Activated CD4-positive, alpha-beta memory T cell treated with anti-CD3 and anti-CD28 coated beads for 36 hours (primary cell): ENCODE measurements at regions of chr11 and their contacts with region 1.

Region 1: GRCh38 chr11:57530596-57531507 is at the start of gene TIMM10:
- DNase-seq: peak; percentile 97
- H3K4me3 Mint-ChIP-seq: peak within 1 kb of the TSS; percentile 93
- H3K27ac Mint-ChIP-seq: peak within 1 kb of the TSS; percentile 80
- H3K4me1 Mint-ChIP-seq: peaks cover 35% of the 10 kb centered on the region
- H3K27me3 Mint-ChIP-seq: no peaks in the 10 kb centered on the region
- total RNA-seq, gene TIMM10: 131 to 134 TPM

Region 2: GRCh38 chr11:57324886-57325734 is 205.7 kb before region 1 on chr11 and contains the start of gene TNKS1BP1:
- CTCF ChIA-PET with region 1: no interaction called
- POLR2A ChIA-PET with region 1: no interaction called
- intact Hi-C with region 1: loop called (anchors 1 kb)
- DNase-seq: peak; percentile 95
- H3K4me3 Mint-ChIP-seq: peak within 1 kb of the TSS; percentile 79
- H3K27ac Mint-ChIP-seq: peak within 1 kb of the TSS; percentile 95
- H3K4me1 Mint-ChIP-seq: peaks cover 42% of the 10 kb centered on the region
- H3K27me3 Mint-ChIP-seq: no peaks in the 10 kb centered on the region
- total RNA-seq, gene TNKS1BP1: 14.0 to 15.1 TPM

Region 3: DNA sequence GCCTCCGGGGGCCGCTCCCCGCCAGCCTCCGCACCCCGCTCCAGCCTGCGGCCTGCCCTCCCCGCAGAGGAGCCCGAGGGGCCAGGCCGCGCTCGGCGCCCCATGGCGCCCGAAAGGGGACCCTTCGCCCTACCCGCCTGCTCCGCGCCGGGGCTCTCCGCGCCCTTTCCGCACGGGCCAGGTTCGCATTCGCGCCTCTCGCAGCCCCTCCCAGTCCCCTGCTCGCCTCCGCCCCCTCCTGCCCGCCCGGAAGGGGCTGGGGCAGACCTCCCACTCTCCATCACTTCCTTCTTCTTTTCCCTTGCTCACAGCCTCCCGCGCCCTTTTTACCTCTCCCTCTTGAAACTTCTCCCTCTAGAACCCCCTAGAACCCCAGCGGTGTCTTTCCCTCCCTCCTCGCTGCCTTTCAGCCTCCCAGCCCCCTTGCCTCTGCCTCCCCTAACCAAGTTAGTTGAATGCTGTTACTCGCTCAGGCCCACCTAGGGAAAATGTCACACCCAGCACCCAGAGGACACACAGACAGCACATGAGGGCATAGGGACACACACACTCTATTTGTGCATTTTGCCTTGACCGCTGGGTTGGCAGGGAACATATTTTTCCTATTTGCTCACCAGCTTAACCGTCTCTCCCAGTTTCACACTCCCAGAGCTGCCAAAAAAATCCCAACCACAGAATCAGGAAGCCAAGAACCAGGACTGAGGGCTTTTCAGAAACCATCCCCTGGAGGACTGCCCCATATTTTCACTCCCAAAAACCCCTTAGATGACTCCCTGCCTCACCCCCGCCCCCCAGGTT is 103.7 kb before region 1 on chr11 and contains the start of gene SLC43A3:
- CTCF ChIA-PET with region 1: interaction called, 11 read pairs
- POLR2A ChIA-PET with region 1: interaction called, 6 read pairs
- intact Hi-C with region 1: loop called (anchors 1 kb)
- DNase-seq: peak; percentile 87
- H3K4me3 Mint-ChIP-seq: peak within 1 kb of the TSS; percentile 96
- H3K27ac Mint-ChIP-seq: peak within 1 kb of the TSS; percentile 92
- H3K4me1 Mint-ChIP-seq: peaks cover 41% of the 10 kb centered on the region
- H3K27me3 Mint-ChIP-seq: no peaks in the 10 kb centered on the region
- total RNA-seq, gene SLC43A3: 170 to 186 TPM

Region 4: DNA sequence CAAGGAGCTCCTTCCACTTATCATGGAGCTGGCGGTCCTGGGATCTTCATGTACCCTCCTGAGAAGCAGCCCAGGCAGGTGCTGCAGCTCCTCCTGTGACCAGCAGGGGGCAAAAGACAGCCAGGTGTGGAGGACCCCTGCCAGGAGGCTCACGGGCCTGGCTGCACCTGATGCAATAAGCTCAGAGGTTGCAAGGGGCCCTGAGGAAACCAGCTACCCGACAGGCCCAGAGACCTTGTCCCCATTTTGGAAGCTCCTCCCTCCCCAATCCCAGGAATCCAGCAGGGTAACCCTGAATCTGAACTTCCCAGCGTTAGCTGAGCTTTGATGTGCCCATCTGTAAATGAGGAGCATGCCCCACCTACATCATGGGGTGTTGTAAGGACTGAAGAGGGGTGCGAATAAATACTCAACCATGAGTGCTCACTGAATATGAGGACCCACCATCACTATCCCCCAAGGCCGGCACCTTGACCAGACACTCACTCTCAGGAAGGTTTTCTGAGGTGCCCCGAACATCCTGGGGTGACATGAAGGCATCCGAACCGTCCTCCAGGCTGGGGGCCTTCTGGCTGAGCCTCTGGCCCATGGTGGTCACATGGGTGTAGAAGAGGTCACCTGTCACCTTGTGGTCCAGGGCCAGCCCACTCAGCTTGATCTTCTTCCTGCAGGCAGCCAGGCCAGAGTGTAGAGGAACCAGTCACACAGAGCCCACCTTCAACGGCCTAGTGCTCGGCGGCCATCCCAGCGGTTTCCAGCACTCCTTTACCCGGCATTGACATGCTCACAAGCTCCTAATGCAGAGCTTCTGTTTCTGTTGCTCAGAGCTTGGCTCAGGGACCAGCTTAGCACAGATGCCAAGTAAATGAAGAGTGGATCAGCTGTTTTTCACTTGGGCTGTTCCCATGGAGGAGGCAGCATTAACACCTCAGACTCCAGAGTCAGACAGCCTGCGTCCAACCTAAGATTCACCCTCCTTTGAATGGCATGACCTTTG is 37.0 kb before region 1 on chr11:
- CTCF ChIA-PET with region 1: interaction called, 562 read pairs
- POLR2A ChIA-PET with region 1: interaction called, 4 read pairs
- intact Hi-C with region 1: loop called (anchors 1 kb)
- DNase-seq: peak; percentile 87
- H3K4me3 Mint-ChIP-seq: no peak overlapping the region
- H3K27ac Mint-ChIP-seq: peak overlapping the region; percentile 83
- H3K4me1 Mint-ChIP-seq: peaks cover 9% of the 10 kb centered on the region
- H3K27me3 Mint-ChIP-seq: no peaks in the 10 kb centered on the region

Region 5: GRCh38 chr11:57567515-57568329 is 36.9 kb after region 1 on chr11 and contains the start of gene UBE2L6:
- CTCF ChIA-PET with region 1: interaction called, 4 read pairs
- POLR2A ChIA-PET with region 1: no interaction called
- intact Hi-C with region 1: loop called (anchors 1 kb)
- DNase-seq: peak; percentile 70
- H3K4me3 Mint-ChIP-seq: peak within 1 kb of the TSS; percentile 92
- H3K27ac Mint-ChIP-seq: peak within 1 kb of the TSS; percentile 98
- H3K4me1 Mint-ChIP-seq: peaks cover 31% of the 10 kb centered on the region
- H3K27me3 Mint-ChIP-seq: no peaks in the 10 kb centered on the region
- total RNA-seq, gene UBE2L6: 152 to 162 TPM

Region 6: DNA sequence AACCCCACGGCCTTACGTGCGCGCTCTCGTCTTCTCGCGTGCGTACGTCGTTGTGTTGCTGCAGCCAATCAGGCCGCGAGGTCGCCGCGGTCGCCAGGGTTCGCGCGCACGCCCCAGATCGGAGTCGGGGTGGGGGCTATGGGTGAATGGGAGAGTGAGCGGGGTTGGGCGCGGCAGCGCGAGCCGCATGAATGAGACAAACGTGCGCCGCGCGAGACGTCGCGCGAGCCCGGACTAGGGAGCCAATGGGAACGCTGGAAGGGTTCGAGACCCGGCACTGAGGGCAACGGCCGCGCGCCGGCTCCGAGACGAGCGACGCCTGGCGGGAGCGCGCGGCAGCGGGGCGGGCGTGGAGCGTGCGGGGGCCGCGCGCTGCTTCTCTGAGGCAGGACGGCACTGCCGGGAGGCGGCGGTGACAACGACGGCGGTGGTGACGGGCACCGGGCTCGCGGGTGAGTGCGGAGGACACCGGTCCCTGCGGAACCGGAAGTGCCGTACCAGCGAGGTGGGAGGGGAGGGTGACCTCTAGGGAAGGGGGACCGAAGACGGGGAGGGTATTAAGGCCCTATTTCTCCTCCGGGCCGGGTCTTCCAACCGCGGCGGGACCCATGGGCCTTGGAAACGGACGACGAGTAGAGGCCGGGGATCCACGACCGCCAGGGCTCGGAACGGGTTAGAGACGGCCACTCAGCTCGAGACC is 137.0 kb after region 1 on chr11 and contains the start of gene ZDHHC5:
- CTCF ChIA-PET with region 1: no interaction called
- POLR2A ChIA-PET with region 1: no interaction called
- intact Hi-C with region 1: loop called (anchors 1 kb)
- DNase-seq: peak; percentile 100
- H3K4me3 Mint-ChIP-seq: peak within 1 kb of the TSS; percentile 83
- H3K27ac Mint-ChIP-seq: peak within 1 kb of the TSS; percentile 100
- H3K4me1 Mint-ChIP-seq: peaks cover 41% of the 10 kb centered on the region
- H3K27me3 Mint-ChIP-seq: no peaks in the 10 kb centered on the region
- total RNA-seq, gene ZDHHC5: 56.8 to 65.5 TPM

Region 7: DNA sequence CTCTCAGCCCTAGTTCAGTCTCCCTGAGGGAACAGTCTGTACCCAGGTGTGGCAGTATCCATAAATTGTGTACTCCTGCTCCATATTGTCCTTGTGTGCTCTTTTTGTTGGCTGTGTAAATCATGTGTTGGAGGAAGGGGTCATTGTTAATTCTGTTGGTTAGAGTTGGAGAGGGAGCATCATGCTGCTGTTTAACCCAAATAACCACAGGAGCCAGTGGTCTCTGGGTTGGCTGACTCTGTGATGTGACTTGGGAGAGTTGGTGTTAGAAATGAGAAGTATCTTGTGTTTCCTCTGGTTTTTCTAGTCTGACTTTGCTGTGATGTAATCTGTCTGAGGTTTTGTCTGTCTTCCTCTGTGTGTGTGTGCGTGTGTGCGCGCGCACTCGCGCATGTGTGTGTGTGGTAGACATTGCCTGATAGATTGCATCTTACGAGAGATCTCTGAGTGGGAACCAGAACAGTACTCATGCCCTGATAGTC is 261.2 kb after region 1 on chr11:
- CTCF ChIA-PET with region 1: no interaction called
- POLR2A ChIA-PET with region 1: no interaction called
- intact Hi-C with region 1: loop called (anchors 1 kb)
- DNase-seq: peak; percentile 90
- H3K4me3 Mint-ChIP-seq: peak overlapping the region; percentile 55
- H3K27ac Mint-ChIP-seq: peak overlapping the region; percentile 86
- H3K4me1 Mint-ChIP-seq: peaks cover 34% of the 10 kb centered on the region
- H3K27me3 Mint-ChIP-seq: peaks cover 1% of the 10 kb centered on the region